HepG2 (cell line): ENCODE measurements at regions of chr7 and their contacts with region 1.

Region 1: DNA sequence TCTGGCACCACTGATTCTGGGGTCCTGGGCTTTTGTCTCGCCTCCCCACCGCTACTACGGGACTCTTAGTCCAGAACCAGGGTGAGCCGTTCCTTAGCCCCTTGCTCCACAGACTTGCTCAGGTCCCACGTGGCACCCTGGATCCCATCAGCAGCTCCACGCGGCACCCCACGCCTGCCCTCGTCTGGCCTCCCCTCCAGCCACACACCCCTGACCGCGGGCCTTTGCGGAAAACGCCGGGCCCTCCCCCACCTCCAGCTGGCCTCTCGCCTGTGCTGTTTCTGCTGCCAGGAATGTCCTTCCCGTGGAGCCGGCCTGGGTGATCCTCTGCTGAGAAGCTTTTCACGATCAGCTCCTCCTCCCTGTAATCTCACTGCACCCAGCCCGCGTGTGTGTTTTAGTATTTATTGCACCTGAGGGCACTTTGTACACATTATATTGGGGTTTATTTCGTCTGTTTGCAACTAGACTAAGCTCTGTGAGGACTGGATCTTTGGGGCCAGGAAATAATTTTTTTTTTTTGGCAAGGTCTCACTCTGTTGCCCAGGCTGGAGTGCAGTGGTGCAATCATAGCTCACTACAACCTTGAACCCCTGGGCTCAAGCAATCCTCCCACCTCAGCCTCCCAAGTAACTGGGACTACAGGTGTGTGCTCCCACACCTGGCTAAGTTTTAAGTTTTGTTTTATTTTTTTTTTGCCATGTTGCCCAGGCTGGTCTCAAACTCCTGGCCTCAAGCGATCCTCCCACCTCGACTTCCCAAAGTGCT is 10.5 kb upstream of the TTYH3 start:
- DNase-seq: no peak
- ATAC-seq: peak; percentile 15
- H3K4me3 ChIP-seq: peak overlapping the region; percentile 61 to 81 (median 63)
- H3K27ac ChIP-seq: peak overlapping the region; percentile 87
- H3K4me1 ChIP-seq: peaks cover 76% of the 10 kb centered on the region
- H3K27me3 ChIP-seq: no peaks in the 10 kb centered on the region
- CTCF ChIP-seq: no peak; the same call in 1 of the 2 replicates
- EP300 ChIP-seq: no peak
- POLR2A ChIP-seq: no peak
- RAD21 ChIP-seq: no peak

Region 2: GRCh38 chr7:2555121-2556052 is 65.9 kb before region 1 on chr7 and contains the start of gene BRAT1:
- CTCF ChIA-PET with region 1: no interaction called
- POLR2A ChIA-PET with region 1: interaction called, 4 read pairs
- in situ Hi-C with region 1: no loop called
- intact Hi-C with region 1: loop called (anchors 5 kb)
- DNase-seq: peak; percentile 92
- ATAC-seq: peak; percentile 86
- H3K4me3 ChIP-seq: peak within 1 kb of the TSS; percentile 72 to 90 (median 86)
- H3K27ac ChIP-seq: peak within 1 kb of the TSS; percentile 100
- H3K4me1 ChIP-seq: peaks cover 48% of the 10 kb centered on the region
- H3K27me3 ChIP-seq: no peaks in the 10 kb centered on the region
- CTCF ChIP-seq: peak; percentile 55
- EP300 ChIP-seq: no peak
- POLR2A ChIP-seq: peak; percentile 58 to 91
- RAD21 ChIP-seq: no peak
- total RNA-seq, gene BRAT1: 16.7 and 20.3 TPM in 2 replicates

Region 3: DNA sequence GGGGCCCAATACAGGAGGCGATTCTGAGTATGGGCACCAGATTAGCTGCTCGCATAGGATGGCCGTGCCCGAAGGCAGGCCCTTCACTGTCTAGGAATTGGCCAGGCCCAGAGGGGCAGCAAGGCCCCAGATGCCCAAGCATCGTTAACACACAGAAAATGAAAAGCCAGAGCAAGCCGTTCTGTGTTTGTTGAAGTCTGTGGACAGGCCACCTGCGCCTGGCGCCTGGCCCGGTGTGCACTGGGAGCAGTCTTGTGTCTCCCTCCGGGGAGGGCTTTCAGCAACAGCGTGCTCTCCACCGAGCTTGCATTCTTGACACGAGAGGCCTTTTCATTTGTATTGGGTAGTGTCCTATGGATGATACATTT is 24.0 kb before region 1 on chr7:
- CTCF ChIA-PET with region 1: no interaction called
- POLR2A ChIA-PET with region 1: no interaction called
- in situ Hi-C with region 1: no loop called
- intact Hi-C with region 1: no loop called
- DNase-seq: no peak
- ATAC-seq: no peak
- H3K4me3 ChIP-seq: no peak overlapping the region
- H3K27ac ChIP-seq: no peak overlapping the region
- H3K4me1 ChIP-seq: no peaks in the 10 kb centered on the region
- H3K27me3 ChIP-seq: no peaks in the 10 kb centered on the region
- CTCF ChIP-seq: no peak
- EP300 ChIP-seq: no peak
- POLR2A ChIP-seq: no peak
- RAD21 ChIP-seq: no peak

Region 4: GRCh38 chr7:2632733-2633537 is 11.7 kb after region 1 on chr7:
- CTCF ChIA-PET with region 1: no interaction called
- POLR2A ChIA-PET with region 1: interaction called, 80 read pairs
- in situ Hi-C with region 1: no loop called
- intact Hi-C with region 1: loop called (anchors 2 kb)
- DNase-seq: no peak
- ATAC-seq: peak; percentile 6
- H3K4me3 ChIP-seq: peak overlapping the region; percentile 88 to 98 (median 97)
- H3K27ac ChIP-seq: peak overlapping the region; percentile 75
- H3K4me1 ChIP-seq: peaks cover 81% of the 10 kb centered on the region
- H3K27me3 ChIP-seq: no peaks in the 10 kb centered on the region
- CTCF ChIP-seq: no peak
- EP300 ChIP-seq: no peak
- POLR2A ChIP-seq: no peak
- RAD21 ChIP-seq: no peak

Region 5: DNA sequence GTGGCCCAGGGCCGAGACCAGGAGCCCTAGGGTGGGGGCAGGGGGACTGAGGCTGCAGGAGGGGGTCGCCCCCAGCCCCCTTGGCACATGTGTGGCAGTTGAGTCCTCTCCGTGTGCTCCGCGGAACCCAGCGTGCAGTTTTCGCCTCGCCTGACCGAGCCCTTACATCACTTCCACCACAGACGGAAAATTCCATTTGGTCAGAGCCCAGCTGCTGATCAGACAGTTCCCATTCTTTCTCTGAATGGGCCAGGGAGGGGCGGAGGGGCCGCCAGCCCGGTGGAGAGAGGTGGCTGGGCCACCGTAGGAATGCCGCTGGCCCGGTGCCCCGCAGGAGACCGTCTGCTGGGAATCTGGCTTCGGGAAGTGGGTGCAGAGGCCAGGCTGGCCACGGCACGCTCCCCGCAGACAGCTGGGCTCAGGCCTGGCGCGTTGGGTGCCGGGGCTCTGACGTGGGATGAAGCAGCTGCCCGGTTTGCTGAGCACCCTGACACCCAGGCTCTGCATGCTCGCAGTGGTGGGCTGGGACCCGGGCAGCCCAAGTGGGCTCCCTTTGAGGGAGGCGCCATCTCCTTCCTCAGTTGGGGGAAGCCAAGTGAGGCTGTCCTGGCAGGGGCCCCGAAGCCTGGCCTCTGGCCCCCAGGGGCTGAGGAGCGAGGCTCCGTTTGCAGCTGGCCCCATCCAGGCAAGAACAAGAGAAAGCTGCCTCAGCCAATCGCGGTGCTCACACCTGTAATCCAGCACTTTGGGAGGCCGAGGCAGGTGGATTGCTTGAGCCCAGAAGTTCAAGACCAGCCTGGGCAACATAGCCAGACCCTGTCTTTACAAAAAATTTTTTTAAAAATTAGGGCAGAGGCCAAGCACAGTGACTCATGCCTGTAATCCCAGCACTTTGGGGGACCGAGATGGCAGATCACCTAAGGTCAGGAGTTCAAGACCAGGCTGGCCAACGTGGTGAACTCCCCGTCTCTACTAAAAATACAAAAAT is 20.5 kb after region 1 on chr7:
- CTCF ChIA-PET with region 1: no interaction called
- POLR2A ChIA-PET with region 1: interaction called, 19 read pairs
- in situ Hi-C with region 1: no loop called
- intact Hi-C with region 1: loop called (anchors 2 kb)
- DNase-seq: peak; percentile 71
- ATAC-seq: peak; percentile 64
- H3K4me3 ChIP-seq: peak overlapping the region in 1 of 3 experiments; percentile 28; a peak in 1 of 6 replicates
- H3K27ac ChIP-seq: peak overlapping the region; percentile 59
- H3K4me1 ChIP-seq: peaks cover 67% of the 10 kb centered on the region
- H3K27me3 ChIP-seq: no peaks in the 10 kb centered on the region
- CTCF ChIP-seq: 0 out of 2 replicates have a peak, but pooled peaks have one; percentile 9
- EP300 ChIP-seq: peak in 1 of 2 experiments; percentile 51; a peak in 1 of 4 replicates
- POLR2A ChIP-seq: peak in 1 of 2 experiments; percentile 39; a peak in 1 of 4 replicates
- RAD21 ChIP-seq: no peak

Region 6: DNA sequence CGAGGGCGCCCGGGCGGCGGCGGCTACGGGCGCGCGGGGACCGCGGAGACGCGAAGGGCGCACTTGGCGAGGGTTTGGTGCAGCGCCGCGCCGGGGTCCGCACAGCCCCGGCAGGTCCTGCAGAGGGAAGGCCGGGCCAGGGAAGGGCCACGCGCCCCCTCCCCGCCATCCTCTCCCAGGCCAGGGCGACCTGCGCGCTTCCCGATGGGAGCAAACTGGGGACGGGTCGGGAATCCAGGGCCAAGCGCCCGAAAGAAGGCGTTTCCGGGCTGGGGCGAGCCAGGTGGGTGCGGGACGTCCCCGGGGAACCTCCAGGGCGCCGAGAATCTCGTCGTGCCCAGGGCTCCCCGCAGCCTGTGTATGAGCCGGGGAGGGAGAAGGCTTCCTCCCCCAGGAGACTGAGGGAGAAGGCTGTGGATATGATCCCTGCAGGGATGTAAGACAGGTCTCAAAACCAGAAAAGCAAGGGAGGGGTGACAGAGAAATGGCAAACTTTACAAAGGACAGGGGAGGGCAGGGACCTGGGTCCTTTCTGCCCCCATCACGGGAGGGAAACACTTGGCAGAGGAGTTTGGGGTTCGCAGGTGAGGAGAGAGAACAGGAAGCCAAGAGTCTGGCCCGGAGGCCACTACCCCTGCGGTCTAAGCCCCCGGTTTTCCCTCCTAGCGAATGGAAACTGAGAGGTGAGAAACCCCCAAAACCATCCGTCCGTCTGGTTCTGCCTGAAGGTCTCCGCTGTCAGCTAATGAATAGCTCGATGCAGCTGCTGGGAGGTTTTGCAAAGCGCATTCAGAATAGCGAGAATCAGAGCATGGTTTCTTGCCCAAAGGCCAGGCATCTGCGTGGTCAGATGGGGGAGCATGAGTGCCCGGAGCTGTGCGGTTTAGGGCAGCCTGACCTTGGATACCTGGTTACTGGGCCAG is 67.4 kb after region 1 on chr7:
- CTCF ChIA-PET with region 1: no interaction called
- POLR2A ChIA-PET with region 1: no interaction called
- in situ Hi-C with region 1: no loop called
- intact Hi-C with region 1: no loop called
- DNase-seq: no peak
- ATAC-seq: peak; percentile 9; the same call in 2 of the 3 replicates
- H3K4me3 ChIP-seq: no peak overlapping the region
- H3K27ac ChIP-seq: no peak overlapping the region
- H3K4me1 ChIP-seq: peaks cover 37% of the 10 kb centered on the region
- H3K27me3 ChIP-seq: peaks cover 23 to 68% of the 10 kb centered on the region in 2 experiments
- CTCF ChIP-seq: no peak
- EP300 ChIP-seq: no peak
- POLR2A ChIP-seq: no peak
- RAD21 ChIP-seq: no peak